ENCODE measurements at regions of chr9 and their contacts with region 1.

Region 1: GRCh38 chr9:22452415-22453010 is 5.9 kb downstream of the DMRTA1 start:
- DNase-seq: peak; percentile 53
- H3K4me3 ChIP-seq: no peak overlapping the region
- H3K27ac ChIP-seq: no peak overlapping the region
- H3K4me1 ChIP-seq: peaks cover 5 to 7% of the 10 kb centered on the region in 2 donors
- H3K27me3 ChIP-seq: no peaks in the 10 kb centered on the region
- CTCF ChIP-seq: peak; percentile 34 to 73 (median 62)
- POLR2A ChIP-seq: no peak

Region 2: DNA sequence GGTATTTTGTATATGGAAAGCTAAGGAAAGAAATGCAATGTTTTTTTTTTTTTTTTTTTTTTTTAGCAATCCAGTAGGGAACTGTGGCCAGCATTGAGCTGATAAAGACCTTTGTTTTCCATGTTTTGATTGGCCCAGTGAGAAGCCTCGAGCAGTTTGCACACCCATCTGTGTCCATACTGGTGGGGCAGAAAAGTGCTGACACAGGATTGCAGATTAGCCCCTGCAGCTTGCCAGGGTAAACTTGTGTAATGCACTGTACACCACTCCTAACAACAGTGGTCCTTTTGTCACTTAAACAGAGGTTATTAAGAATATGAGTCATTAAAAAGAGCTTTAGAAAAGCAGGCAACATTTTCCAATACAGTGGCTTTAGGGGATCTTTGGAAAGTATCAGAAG is 310.6 kb before region 1 on chr9:
- intact Hi-C with region 1: no loop called
- DNase-seq: no peak
- H3K4me3 ChIP-seq: no peak overlapping the region
- H3K27ac ChIP-seq: no peak overlapping the region
- H3K4me1 ChIP-seq: no peaks in the 10 kb centered on the region
- H3K27me3 ChIP-seq: no peaks in the 10 kb centered on the region
- CTCF ChIP-seq: no peak
- POLR2A ChIP-seq: no peak

Region 3: DNA sequence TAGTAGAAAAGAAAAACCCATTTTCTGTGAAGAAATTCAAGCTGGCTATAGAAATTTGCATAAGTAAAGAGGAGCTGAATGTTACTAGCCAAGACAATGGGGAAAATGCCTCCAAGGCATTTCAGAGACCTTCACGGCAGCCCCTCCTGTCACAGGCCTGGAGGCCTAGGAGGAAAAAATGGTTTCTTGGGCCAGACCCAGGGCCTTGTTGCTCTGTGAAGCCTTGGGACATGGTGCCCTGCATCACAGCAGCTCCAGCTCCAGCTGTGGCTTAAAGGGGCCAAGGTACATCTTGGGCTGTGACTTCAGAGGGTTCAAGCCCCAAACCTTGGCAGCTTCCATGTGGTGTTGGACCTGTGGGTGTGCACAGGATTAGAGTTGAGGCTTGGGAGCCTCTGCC is 135.9 kb before region 1 on chr9:
- intact Hi-C with region 1: loop called (anchors 10 kb)
- DNase-seq: no peak
- H3K4me3 ChIP-seq: no peak overlapping the region
- H3K27ac ChIP-seq: no peak overlapping the region
- H3K4me1 ChIP-seq: no peaks in the 10 kb centered on the region
- H3K27me3 ChIP-seq: no peaks in the 10 kb centered on the region
- CTCF ChIP-seq: no peak
- POLR2A ChIP-seq: no peak

Measured in thyroid gland (tissue), 4 donors.